ENCODE measurements at regions of chr9 and their contacts with region 1.

Region 1: GRCh38 chr9:90773617-90774016 is 28.0 kb upstream of the SYK start:
- DNase-seq: no peak
- H3K4me3 ChIP-seq: no peak overlapping the region
- H3K27ac ChIP-seq: no peak overlapping the region
- H3K4me1 ChIP-seq: no peaks in the 10 kb centered on the region
- H3K27me3 ChIP-seq: no peaks in the 10 kb centered on the region
- CTCF ChIP-seq: no peak

Region 2: GRCh38 chr9:89353989-89354388 is 1419.6 kb before region 1 on chr9:
- intact Hi-C with region 1: no loop called
- DNase-seq: no peak
- H3K4me3 ChIP-seq: no peak overlapping the region
- H3K27ac ChIP-seq: no peak overlapping the region
- H3K4me1 ChIP-seq: no peaks in the 10 kb centered on the region
- H3K27me3 ChIP-seq: no peaks in the 10 kb centered on the region
- CTCF ChIP-seq: no peak

Region 3: DNA sequence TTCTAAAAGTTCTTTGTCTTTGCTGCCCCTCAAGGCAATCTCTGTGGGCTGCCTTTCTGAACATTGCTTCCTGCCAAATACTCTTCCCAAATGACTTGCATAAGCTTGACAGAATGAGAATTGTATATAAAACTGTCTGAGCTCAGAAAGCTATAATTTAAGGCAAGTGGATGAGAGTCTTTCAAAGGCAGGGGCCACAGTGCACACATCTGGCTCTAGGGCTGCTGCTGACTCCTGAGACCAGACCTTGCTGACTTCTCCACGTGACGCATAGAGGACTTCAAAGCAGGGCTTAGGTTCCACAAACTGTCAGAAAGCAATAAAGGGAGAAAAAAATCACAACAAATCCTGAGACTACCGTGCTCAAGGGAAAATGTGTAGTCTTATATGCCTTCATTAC is 51.5 kb before region 1 on chr9:
- intact Hi-C with region 1: loop called (anchors 10 kb)
- DNase-seq: no peak
- H3K4me3 ChIP-seq: no peak overlapping the region
- H3K27ac ChIP-seq: no peak overlapping the region
- H3K4me1 ChIP-seq: no peaks in the 10 kb centered on the region
- H3K27me3 ChIP-seq: no peaks in the 10 kb centered on the region
- CTCF ChIP-seq: no peak

Region 4: GRCh38 chr9:90956026-90956810 is 182.6 kb after region 1 on chr9:
- intact Hi-C with region 1: no loop called
- DNase-seq: no peak
- H3K4me3 ChIP-seq: no peak overlapping the region
- H3K27ac ChIP-seq: no peak overlapping the region
- H3K4me1 ChIP-seq: no peaks in the 10 kb centered on the region
- H3K27me3 ChIP-seq: no peaks in the 10 kb centered on the region
- CTCF ChIP-seq: no peak